CD8-positive, alpha-beta T cell (primary cell): ENCODE measurements at regions of chr9 and their contacts with region 1.

Region 1: DNA sequence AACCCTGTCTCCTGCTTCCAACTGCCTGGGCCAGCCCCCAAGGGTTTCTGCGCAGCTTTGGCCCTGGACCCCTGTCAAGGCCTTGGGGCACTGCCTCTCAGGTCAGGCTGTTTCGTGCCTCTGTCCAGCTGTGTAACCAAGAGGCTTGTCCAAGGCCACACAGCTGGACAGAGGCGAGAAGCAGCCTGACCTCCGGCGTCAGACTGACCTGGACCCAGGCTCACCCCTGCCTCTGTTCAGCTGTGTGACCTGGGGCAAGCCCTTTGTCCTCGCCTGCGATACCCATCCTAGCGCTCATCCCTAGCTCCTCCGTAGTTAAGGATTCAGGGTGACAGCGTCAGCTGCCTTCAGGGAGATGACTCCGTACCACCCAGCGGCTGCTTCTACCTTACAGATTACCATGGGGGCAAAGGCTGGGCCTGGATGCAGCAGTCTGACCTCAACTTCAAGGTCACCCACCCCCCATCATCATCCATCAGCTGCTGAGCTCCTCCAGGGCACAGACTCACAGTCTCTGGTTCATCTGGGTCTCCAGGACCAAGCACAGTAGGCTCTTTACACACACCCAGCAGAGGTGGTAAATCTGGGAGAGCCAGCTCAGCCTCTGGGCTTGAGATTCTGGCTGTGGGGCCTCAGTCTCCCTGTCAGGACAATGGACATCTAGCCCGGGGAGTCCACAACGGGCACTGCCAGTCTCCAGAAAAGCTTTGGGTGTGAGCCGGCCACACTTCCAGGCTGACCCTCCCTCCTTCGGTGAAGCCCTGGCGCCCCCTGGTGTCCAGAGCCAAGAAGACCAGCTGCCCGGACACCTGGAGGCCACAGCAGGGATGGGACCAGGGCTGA is 7.9 kb downstream of the AK1 start:
- DNase-seq: peak; percentile 51 to 89 (median 81)
- ATAC-seq: peak; percentile 71
- H3K4me3 ChIP-seq: no peak overlapping the region
- H3K4me3 Mint-ChIP-seq: no peak overlapping the region
- H3K27ac ChIP-seq: no peak overlapping the region
- H3K27ac Mint-ChIP-seq: no peak overlapping the region
- H3K4me1 ChIP-seq: peaks cover 17% of the 10 kb centered on the region
- H3K4me1 Mint-ChIP-seq: peaks cover 17% of the 10 kb centered on the region
- H3K27me3 ChIP-seq: no peaks in the 10 kb centered on the region
- H3K27me3 Mint-ChIP-seq: no peaks in the 10 kb centered on the region
- CTCF ChIP-seq: peak; percentile 74

Region 2: DNA sequence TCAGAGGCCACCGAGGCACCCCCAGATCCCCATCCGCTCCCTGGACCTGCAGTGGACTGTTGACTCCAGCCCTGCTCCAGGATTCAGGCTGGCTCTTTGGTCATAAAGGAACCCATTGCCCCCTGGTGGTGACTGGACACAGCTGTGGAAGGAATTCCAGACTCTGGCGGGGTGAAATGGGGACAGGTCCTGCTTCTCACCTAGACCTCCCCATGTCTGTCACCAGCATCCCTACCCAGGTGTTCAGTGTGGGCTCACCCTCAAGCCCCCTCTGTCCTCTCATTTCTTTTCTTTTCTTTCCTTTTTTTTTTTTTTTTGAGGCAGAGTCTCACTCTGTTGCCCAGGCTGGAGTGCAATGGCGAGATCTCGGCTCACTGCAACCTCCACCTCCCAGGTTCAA is 283.0 kb before region 1 on chr9:
- CTCF ChIA-PET with region 1: interaction called, 29 read pairs
- POLR2A ChIA-PET with region 1: no interaction called
- intact Hi-C with region 1: loop called in 1 of 2 experiments (anchors 1 kb)
- DNase-seq: peak; percentile 26 to 78 (median 64)
- ATAC-seq: peak; percentile 62
- H3K4me3 ChIP-seq: no peak overlapping the region
- H3K4me3 Mint-ChIP-seq: no peak overlapping the region
- H3K27ac ChIP-seq: no peak overlapping the region
- H3K27ac Mint-ChIP-seq: no peak overlapping the region
- H3K4me1 ChIP-seq: no peaks in the 10 kb centered on the region
- H3K4me1 Mint-ChIP-seq: peaks cover 3% of the 10 kb centered on the region
- H3K27me3 ChIP-seq: no peaks in the 10 kb centered on the region
- H3K27me3 Mint-ChIP-seq: peaks cover 13% of the 10 kb centered on the region
- CTCF ChIP-seq: peak; percentile 57

Region 3: DNA sequence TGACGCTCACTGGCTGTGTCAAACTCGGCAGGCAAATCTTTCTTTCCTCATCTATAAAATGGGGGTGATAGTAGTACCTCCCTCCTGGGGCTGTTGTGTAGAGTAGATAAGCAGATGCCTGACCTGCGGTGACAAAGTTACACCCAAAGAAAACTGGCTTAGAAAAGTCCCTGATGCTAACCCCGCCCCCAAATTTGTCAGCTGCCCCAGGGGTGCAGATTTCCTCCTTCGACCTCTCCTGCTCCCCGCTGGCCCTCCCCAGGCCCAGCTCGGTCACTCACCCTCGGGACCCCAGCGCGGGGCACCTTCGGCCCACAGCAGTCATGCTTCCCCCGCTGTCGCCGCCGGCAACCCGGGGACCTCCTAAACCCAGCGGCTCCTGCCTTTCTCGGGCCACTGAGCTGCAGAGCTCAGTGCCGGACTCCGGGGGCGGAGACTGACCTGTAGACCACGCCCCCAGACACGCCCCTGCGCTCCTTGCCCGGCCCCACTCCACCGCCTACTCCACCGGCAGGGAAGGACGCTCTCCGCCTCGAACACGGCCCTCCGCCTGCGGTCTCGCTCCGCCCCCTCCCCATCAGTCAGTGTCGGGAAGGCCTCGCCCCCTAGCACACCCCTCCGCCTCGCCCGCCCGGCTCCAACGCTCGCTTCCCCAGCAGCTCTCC is 98.5 kb before region 1 on chr9:
- CTCF ChIA-PET with region 1: interaction called, 15 read pairs
- POLR2A ChIA-PET with region 1: interaction called, 3 read pairs
- intact Hi-C with region 1: no loop called
- DNase-seq: peak; percentile 81 to 96 (median 93)
- ATAC-seq: peak; percentile 79
- H3K4me3 ChIP-seq: peak overlapping the region; percentile 55 to 65
- H3K4me3 Mint-ChIP-seq: peak overlapping the region; percentile 88
- H3K27ac ChIP-seq: peak overlapping the region; percentile 58 to 83
- H3K27ac Mint-ChIP-seq: peak overlapping the region; percentile 96
- H3K4me1 ChIP-seq: peaks cover 75% of the 10 kb centered on the region
- H3K4me1 Mint-ChIP-seq: peaks cover 73% of the 10 kb centered on the region
- H3K27me3 ChIP-seq: no peaks in the 10 kb centered on the region
- H3K27me3 Mint-ChIP-seq: no peaks in the 10 kb centered on the region
- CTCF ChIP-seq: no peak

Region 4: DNA sequence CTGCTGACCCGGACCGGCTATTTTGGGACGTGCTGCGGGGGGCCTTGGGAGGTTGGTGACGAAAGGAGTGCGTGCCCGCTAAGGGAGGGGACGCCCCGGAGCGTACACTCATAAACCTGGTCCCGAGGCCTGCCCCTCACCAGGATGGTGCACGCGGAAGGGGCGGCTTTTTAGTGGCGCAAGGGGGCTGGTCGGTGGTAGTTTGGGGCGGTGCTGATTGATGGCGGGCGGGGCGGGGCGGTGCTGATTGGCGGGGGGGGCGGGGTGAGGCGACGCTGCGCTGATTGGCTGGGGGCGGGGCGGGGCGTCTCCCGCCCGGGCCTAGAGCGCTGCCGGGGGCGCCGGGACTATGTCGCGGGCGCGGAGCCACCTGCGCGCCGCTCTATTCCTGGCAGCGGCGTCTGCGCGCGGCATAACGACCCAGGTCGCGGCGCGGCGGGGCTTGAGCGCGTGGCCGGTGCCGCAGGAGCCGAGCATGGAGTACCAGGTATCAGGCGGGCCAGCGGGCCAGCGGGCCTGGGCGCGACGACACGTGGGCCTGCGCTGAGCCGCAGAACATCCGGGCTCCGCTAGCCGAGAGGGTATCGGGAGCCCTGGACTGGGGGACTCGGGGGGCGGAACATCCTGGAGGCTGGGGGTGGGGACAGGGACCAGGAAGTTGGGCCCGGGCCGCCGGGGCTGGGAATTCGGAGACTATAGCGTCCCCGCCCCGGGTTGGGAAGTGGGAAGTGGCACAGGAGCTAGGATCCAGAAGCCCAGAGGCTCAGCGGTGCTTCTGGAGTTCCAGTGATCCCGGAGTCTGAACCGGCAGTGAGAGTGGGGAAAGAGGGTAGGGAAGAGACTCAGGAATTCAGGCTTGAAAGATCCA is 66.7 kb before region 1 on chr9 and contains the start of gene FPGS:
- CTCF ChIA-PET with region 1: interaction called, 23 read pairs
- POLR2A ChIA-PET with region 1: interaction called, 5 read pairs
- intact Hi-C with region 1: no loop called
- DNase-seq: peak; percentile 57 to 92 (median 81)
- ATAC-seq: peak; percentile 87
- H3K4me3 ChIP-seq: peak within 1 kb of the TSS; percentile 95 to 98
- H3K4me3 Mint-ChIP-seq: peak within 1 kb of the TSS; percentile 92
- H3K27ac ChIP-seq: peak within 1 kb of the TSS; percentile 89
- H3K27ac Mint-ChIP-seq: peak within 1 kb of the TSS; percentile 87
- H3K4me1 ChIP-seq: peaks cover 21% of the 10 kb centered on the region
- H3K4me1 Mint-ChIP-seq: peaks cover 38% of the 10 kb centered on the region
- H3K27me3 ChIP-seq: no peaks in the 10 kb centered on the region
- H3K27me3 Mint-ChIP-seq: no peaks in the 10 kb centered on the region
- CTCF ChIP-seq: no peak
- total RNA-seq, gene FPGS: 91.9 to 95.3 TPM

Region 5: GRCh38 chr9:127899128-127899946 is 29.8 kb after region 1 on chr9 and contains the start of gene ST6GALNAC6:
- CTCF ChIA-PET with region 1: interaction called, 14 read pairs
- POLR2A ChIA-PET with region 1: interaction called, 3 read pairs
- intact Hi-C with region 1: loop called in 1 of 2 experiments (anchors 1 kb)
- DNase-seq: peak; percentile 44 to 85 (median 65)
- ATAC-seq: peak; percentile 80
- H3K4me3 ChIP-seq: peak within 1 kb of the TSS; percentile 77 to 85
- H3K4me3 Mint-ChIP-seq: peak within 1 kb of the TSS; percentile 86
- H3K27ac ChIP-seq: peak within 1 kb of the TSS; percentile 46 to 55
- H3K27ac Mint-ChIP-seq: peak within 1 kb of the TSS; percentile 83
- H3K4me1 ChIP-seq: peaks cover 44% of the 10 kb centered on the region
- H3K4me1 Mint-ChIP-seq: peaks cover 41% of the 10 kb centered on the region
- H3K27me3 ChIP-seq: no peaks in the 10 kb centered on the region
- H3K27me3 Mint-ChIP-seq: no peaks in the 10 kb centered on the region
- CTCF ChIP-seq: no peak
- total RNA-seq, gene ST6GALNAC6: 49.8 to 56.1 TPM